ENCODE measurements at regions of chr17 and their contacts with region 1.

Region 1: DNA sequence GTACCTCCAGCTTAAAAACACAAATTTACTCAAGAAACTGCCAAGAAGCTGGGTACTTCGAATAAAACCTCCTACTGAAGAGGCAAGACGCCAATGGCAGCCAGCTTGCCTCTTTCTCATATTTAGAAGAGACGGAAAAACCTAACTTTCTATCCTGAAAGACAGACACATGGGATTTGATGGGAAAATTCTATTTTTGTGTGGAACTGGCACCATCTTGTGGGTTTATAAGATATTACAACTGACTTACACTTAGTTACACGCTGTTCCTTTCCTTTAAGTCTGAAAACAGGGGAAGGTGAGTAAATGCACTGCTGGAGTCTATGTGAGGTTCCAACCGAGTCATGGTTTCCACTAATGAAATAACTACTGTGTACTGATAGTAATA is 10.3 kb downstream of the ZNF18 start:
- DNase-seq: peak; percentile 61
- H3K4me3 Mint-ChIP-seq: no peak overlapping the region
- H3K27ac Mint-ChIP-seq: no peak overlapping the region
- H3K4me1 Mint-ChIP-seq: peaks cover 5% of the 10 kb centered on the region
- H3K27me3 Mint-ChIP-seq: no peaks in the 10 kb centered on the region
- CTCF ChIP-seq: peak; percentile 69

Region 2: GRCh38 chr17:10729334-10730193 is 1257.4 kb before region 1 on chr17 and contains the start of gene TMEM220:
- CTCF ChIA-PET with region 1: no interaction called
- POLR2A ChIA-PET with region 1: no interaction called
- intact Hi-C with region 1: loop called (anchors 10 kb)
- DNase-seq: no peak
- H3K4me3 Mint-ChIP-seq: peak within 1 kb of the TSS; percentile 75
- H3K27ac Mint-ChIP-seq: peak within 1 kb of the TSS; percentile 28
- H3K4me1 Mint-ChIP-seq: no peaks in the 10 kb centered on the region
- H3K27me3 Mint-ChIP-seq: peaks cover 7% of the 10 kb centered on the region
- CTCF ChIP-seq: no peak
- total RNA-seq, gene TMEM220: 0.96 and 1.1 TPM in 2 replicates

Region 3: DNA sequence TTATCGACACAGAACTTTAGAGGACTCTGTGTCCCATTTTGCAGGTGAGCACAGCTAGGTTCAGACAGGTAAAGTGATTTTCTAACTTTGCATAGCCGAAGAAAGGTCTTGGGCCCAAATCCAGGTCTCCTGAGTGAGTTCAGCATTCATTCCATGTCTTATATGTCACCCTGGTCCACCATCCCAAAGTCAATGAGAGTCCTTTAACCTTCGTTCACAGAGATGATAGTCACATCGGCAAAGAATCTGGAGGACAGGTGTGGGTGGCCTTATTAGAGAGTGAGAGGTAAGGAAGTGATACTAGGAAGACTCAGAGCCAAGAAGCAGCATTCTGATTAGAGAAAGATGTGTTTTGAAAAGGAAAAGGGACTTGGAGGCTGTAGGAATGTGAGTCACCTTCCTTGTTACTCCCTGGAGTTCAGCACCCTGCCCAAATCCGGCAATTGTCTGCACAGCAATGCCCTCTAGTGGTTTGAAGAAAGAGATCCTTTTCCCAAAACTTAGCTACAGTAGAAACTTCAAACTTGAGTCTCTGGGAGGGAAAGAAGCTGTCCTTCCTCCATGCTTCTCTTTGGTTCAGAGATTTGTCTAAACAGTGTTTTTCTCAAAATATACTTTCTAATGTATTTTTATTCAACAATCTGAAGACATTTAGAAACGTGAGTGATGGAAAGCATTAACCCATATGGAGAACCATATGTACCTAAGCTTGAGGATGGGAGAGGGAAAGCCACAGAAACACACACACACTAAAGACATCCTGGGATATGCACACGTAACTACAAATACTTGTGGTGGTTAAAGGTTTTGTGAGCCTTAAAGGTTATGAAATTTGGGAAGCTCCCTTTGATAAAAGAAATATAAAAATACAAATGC is 842.3 kb before region 1 on chr17:
- CTCF ChIA-PET with region 1: interaction called, 5 read pairs
- POLR2A ChIA-PET with region 1: no interaction called
- intact Hi-C with region 1: loop called (anchors 1 kb)
- DNase-seq: peak; percentile 46
- H3K4me3 Mint-ChIP-seq: no peak overlapping the region
- H3K27ac Mint-ChIP-seq: no peak overlapping the region
- H3K4me1 Mint-ChIP-seq: peaks cover 14% of the 10 kb centered on the region
- H3K27me3 Mint-ChIP-seq: no peaks in the 10 kb centered on the region
- CTCF ChIP-seq: peak; percentile 74

Region 4: GRCh38 chr17:11644261-11645212 is 342.4 kb before region 1 on chr17:
- CTCF ChIA-PET with region 1: interaction called, 8 read pairs
- POLR2A ChIA-PET with region 1: no interaction called
- intact Hi-C with region 1: loop called (anchors 10 kb)
- DNase-seq: peak; percentile 63
- H3K4me3 Mint-ChIP-seq: no peak overlapping the region
- H3K27ac Mint-ChIP-seq: no peak overlapping the region
- H3K4me1 Mint-ChIP-seq: peaks cover 17% of the 10 kb centered on the region
- H3K27me3 Mint-ChIP-seq: no peaks in the 10 kb centered on the region
- CTCF ChIP-seq: peak; percentile 74

Region 5: GRCh38 chr17:11880714-11881113 is 106.2 kb before region 1 on chr17:
- CTCF ChIA-PET with region 1: interaction called, 5 read pairs
- POLR2A ChIA-PET with region 1: no interaction called
- intact Hi-C with region 1: loop called (anchors 1 kb)
- DNase-seq: peak; percentile 5
- H3K4me3 Mint-ChIP-seq: no peak overlapping the region
- H3K27ac Mint-ChIP-seq: no peak overlapping the region
- H3K4me1 Mint-ChIP-seq: no peaks in the 10 kb centered on the region
- H3K27me3 Mint-ChIP-seq: no peaks in the 10 kb centered on the region
- CTCF ChIP-seq: peak; percentile 59

Region 6: DNA sequence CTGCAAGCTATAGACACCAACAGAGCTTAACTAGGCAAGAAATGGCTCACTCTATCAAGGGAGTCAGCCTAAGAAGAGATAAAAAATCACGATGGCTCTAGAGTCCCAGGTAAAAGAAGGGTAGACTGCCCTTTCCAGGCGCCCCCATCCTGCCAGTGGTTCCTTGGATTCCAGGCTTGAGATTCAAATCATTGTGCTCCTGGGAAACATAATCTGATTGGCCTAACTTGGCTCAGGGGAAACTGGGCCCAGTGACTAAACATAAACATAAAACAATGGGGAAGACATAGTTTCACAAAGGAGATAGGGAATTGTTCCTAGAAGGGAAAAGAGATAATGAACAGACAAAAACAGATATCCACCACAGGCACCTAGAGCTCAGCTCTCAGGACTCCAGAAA is 46.0 kb before region 1 on chr17:
- CTCF ChIA-PET with region 1: interaction called, 48 read pairs
- POLR2A ChIA-PET with region 1: interaction called, 15 read pairs
- intact Hi-C with region 1: loop called (anchors 5 kb)
- DNase-seq: no peak
- H3K4me3 Mint-ChIP-seq: no peak overlapping the region
- H3K27ac Mint-ChIP-seq: no peak overlapping the region
- H3K4me1 Mint-ChIP-seq: peaks cover 16% of the 10 kb centered on the region
- H3K27me3 Mint-ChIP-seq: no peaks in the 10 kb centered on the region
- CTCF ChIP-seq: no peak

Region 7: GRCh38 chr17:11997147-11997846 is 10.4 kb after region 1 on chr17 and contains the start of gene ZNF18:
- CTCF ChIA-PET with region 1: interaction called, 6 read pairs
- POLR2A ChIA-PET with region 1: interaction called, 14 read pairs
- intact Hi-C with region 1: no loop called
- DNase-seq: peak; percentile 91
- H3K4me3 Mint-ChIP-seq: peak within 1 kb of the TSS; percentile 82
- H3K27ac Mint-ChIP-seq: peak within 1 kb of the TSS; percentile 92
- H3K4me1 Mint-ChIP-seq: peaks cover 8% of the 10 kb centered on the region
- H3K27me3 Mint-ChIP-seq: no peaks in the 10 kb centered on the region
- CTCF ChIP-seq: no peak
- total RNA-seq, gene ZNF18: 4.6 and 7.3 TPM in 2 replicates

Region 8: DNA sequence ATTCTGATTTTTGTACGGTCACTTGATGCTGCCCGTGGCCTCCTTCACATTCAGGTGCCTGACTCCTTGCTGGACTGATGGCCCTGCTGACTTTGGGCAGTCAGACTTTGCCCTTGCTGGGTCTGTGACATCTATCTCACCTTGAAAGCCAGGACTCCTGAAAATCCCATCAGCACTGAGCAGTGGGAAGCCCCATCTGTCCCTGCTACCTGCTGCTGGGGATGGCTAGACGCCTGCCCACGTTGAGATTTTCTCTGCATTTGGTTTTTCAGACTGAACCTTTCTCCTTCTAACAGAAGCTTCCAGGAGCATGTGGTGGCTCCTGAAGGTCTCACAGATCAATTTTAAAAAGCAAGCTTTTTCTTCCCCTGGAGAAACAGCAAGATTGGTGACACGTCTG is 20.5 kb after region 1 on chr17:
- CTCF ChIA-PET with region 1: no interaction called
- POLR2A ChIA-PET with region 1: no interaction called
- intact Hi-C with region 1: no loop called
- DNase-seq: no peak
- H3K4me3 Mint-ChIP-seq: no peak overlapping the region
- H3K27ac Mint-ChIP-seq: no peak overlapping the region
- H3K4me1 Mint-ChIP-seq: peaks cover 5% of the 10 kb centered on the region
- H3K27me3 Mint-ChIP-seq: no peaks in the 10 kb centered on the region
- CTCF ChIP-seq: no peak